Heart left ventricle (tissue), 16 donors: ENCODE measurements at regions of chr18 and their contacts with region 1.

Region 1: DNA sequence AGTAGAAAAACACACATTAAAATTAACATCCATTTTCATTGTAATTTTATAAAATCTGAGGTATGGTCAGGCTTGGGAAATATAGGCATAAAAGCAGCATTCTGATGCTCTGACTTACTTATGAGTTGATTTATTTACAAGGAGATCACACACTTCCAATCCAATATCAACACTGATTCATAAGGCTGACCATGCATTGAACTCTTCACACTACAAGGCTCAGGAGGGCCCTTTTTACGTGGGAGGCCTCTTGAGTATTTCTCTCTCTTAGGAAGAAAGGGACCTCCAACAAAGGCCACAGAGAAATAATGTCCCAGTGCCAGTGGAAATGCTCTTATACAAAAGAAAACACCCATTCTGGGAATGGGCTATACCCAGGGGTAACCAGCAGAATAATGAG is 222.8 kb downstream of the NAPG start:
- DNase-seq: no peak
- ATAC-seq: no peak
- H3K4me3 ChIP-seq: no peak overlapping the region
- H3K27ac ChIP-seq: no peak overlapping the region
- H3K4me1 ChIP-seq: no peaks in the 10 kb centered on the region
- H3K27me3 ChIP-seq: peaks cover 0 to 3% (median 0%) of the 10 kb centered on the region in 9 donors
- CTCF ChIP-seq: no peak
- POLR2A ChIP-seq: no peak

Region 2: GRCh38 chr18:10804126-10804525 is 55.5 kb after region 1 on chr18:
- intact Hi-C with region 1: loop called in 1 of 10 experiments (anchors 10 kb)
- DNase-seq: no peak
- ATAC-seq: no peak
- H3K4me3 ChIP-seq: no peak overlapping the region
- H3K27ac ChIP-seq: no peak overlapping the region
- H3K4me1 ChIP-seq: peaks cover 0 to 4% (median 0%) of the 10 kb centered on the region in 12 donors
- H3K27me3 ChIP-seq: no peaks in the 10 kb centered on the region
- CTCF ChIP-seq: no peak
- POLR2A ChIP-seq: no peak